ENCODE measurements at regions of chr1 and their contacts with region 1.

Region 1: DNA sequence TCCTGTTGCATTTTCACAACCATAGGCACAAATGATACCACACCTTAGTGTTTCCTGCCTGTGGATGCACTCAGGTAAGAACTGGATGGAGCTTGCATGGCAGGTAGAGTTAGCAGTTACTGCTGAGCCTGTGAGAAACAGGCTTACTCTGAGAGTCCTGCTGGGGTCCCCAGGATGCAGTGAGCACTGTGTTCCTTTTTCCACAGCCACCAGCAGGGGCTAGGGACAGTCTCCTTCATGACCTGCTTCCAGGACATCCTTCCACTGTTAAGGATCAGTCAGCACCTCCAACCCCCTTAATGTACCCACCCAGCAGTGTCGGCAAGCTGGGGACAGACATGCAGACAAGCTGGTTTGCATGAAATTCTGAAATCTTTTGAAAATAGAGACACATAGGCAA is 16.3 kb downstream of the CAPN8 start:
- DNase-seq: no peak
- ATAC-seq: no peak
- H3K4me3 ChIP-seq: no peak overlapping the region
- H3K27ac ChIP-seq: no peak overlapping the region
- H3K4me1 ChIP-seq: peaks cover 8% of the 10 kb centered on the region
- H3K27me3 ChIP-seq: no peaks in the 10 kb centered on the region
- CTCF ChIP-seq: no peak

Region 2: GRCh38 chr1:223114871-223115270 is 534.4 kb before region 1 on chr1:
- CTCF ChIA-PET with region 1: interaction called, 11 read pairs
- POLR2A ChIA-PET with region 1: no interaction called
- in situ Hi-C with region 1: no loop called
- intact Hi-C with region 1: no loop called
- DNase-seq: no peak
- ATAC-seq: no peak
- H3K4me3 ChIP-seq: no peak overlapping the region
- H3K27ac ChIP-seq: no peak overlapping the region
- H3K4me1 ChIP-seq: no peaks in the 10 kb centered on the region
- H3K27me3 ChIP-seq: peaks cover 20% of the 10 kb centered on the region; the same call in 1 of the 2 replicates
- CTCF ChIP-seq: no peak

Region 3: DNA sequence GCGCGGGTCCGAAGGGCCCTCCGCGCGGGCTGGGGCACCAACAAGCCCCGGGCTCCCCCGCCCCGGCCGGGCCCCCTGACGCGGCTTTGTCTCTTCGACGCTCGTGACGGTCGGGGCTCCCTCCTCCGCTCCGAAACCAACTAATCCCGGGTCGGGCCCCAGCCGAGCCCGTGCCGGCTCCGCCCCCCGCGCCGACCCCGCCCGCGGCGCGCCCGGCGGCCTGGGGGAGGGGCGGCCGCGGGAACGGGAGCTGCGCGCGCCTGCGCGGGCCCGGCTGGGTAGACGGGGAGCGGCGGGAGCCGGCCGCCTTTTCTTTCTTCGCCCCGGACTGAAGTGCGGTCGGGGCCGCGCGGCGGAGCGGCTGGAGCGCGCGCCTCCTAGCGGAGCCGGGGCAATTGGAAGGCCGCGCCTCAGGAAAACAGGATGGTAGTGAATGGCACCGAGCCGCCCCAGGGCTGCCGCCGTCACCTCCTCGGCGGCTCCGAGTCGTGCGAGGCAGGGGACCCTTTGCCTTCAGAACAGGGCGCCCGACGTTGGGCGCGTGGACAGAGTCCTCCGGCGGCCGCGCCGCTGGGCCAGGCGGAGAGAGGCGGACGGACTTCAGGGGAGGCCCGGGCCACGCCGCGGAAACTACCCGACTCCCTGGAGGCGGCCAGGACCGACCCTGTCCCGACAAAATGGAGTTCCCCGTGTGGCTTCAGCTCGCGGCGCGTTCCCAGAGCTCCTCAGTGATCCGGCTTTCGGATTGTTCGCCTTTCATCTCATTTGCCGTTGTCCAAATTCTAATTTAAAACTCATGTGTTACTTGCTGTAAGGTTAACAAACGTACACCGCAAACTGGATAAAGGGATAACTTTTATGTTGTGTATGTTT is 196.8 kb after region 1 on chr1 and contains the start of gene TP53BP2:
- CTCF ChIA-PET with region 1: no interaction called
- POLR2A ChIA-PET with region 1: no interaction called
- in situ Hi-C with region 1: no loop called
- intact Hi-C with region 1: no loop called
- DNase-seq: peak; percentile 47
- ATAC-seq: peak; percentile 93
- H3K4me3 ChIP-seq: peak within 1 kb of the TSS; percentile 75 to 96
- H3K27ac ChIP-seq: peak within 1 kb of the TSS; percentile 89
- H3K4me1 ChIP-seq: peaks cover 21% of the 10 kb centered on the region
- H3K27me3 ChIP-seq: no peaks in the 10 kb centered on the region
- CTCF ChIP-seq: peak; percentile 94
- total RNA-seq, gene TP53BP2: 51.4 TPM

Region 4: DNA sequence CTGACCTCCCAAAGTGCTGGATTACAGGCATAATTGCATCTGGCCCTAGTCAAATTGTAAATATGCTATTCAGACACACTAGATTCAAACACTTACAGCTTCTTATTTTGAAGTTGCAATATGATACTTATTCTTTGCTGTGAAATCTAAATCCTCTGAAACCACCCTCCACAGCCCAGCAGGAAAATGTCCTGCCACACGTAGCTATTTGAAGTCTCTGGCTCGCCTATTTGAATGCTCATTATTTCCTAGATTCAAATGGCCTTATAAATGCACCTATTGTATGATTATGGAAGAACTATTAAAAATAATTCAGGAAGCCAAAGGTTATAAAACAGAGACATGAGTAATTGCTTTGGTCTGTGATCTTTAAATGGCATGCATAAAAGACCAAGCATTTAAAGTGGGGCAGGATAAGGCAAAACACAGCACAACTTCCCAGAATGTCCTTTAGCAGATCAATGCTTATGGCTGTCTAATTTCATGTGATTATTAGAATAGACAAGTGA is 438.1 kb after region 1 on chr1:
- CTCF ChIA-PET with region 1: no interaction called
- POLR2A ChIA-PET with region 1: no interaction called
- in situ Hi-C with region 1: no loop called
- intact Hi-C with region 1: no loop called
- DNase-seq: no peak
- ATAC-seq: no peak
- H3K4me3 ChIP-seq: no peak overlapping the region
- H3K27ac ChIP-seq: no peak overlapping the region
- H3K4me1 ChIP-seq: no peaks in the 10 kb centered on the region
- H3K27me3 ChIP-seq: no peaks in the 10 kb centered on the region
- CTCF ChIP-seq: no peak

Region 5: DNA sequence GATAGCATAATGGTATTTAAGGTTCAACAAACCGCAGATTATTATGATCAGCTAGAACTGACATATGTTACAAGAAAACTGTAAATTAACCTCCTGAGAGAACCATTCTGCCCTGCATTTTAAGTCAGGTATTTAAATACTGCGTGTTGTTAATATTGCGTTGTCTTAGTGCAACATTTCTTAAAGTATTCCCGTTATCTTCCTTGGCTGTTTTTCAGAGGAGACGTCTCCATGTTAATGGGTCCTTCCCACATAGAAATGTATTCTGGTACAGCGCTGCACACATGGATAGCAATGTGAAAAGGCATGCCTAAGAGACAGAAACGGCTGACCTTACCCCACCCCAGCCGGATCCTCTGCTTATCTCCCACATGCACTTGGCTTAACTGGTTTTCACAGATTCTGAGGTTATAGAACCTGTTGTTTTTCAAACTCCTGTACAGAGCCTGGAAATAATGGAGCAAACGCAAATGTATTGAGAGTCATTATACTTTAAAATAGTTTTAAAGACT is 511.0 kb after region 1 on chr1:
- CTCF ChIA-PET with region 1: no interaction called
- POLR2A ChIA-PET with region 1: no interaction called
- in situ Hi-C with region 1: no loop called
- intact Hi-C with region 1: no loop called
- DNase-seq: no peak
- ATAC-seq: no peak
- H3K4me3 ChIP-seq: no peak overlapping the region
- H3K27ac ChIP-seq: no peak overlapping the region
- H3K4me1 ChIP-seq: no peaks in the 10 kb centered on the region
- H3K27me3 ChIP-seq: no peaks in the 10 kb centered on the region
- CTCF ChIP-seq: no peak